PC-9 (cell line): ENCODE measurements at regions of chr15 and their contacts with region 1.

Region 1: DNA sequence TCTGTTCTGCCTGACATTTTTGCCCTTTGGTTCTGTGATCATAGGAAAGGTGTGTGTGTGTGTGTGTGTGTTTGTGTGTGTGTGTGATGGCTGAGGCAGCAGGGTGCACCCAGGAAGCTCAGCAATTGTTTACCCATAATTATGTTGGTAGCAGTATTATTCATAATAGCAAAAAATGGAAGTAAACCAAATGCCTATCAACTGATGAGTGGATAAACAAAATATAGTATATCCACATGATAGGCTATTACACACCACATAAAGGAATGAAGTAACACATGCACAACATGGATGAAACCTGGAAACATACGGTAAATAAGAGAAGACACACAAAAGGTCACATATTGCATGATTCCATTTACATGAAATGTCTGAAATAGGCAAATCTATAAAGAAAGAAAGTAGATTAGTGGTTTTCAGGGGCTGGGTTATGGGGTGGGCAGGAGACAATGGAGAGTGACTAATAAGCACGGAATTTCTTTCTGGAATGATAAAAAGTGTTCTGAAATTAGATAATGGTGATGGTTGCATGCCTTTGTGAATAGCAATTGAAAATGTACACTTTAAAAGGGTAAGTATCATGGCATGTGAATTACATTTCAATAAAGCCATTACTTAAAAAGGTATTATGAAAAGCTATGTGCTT is 167.2 kb downstream of the POLR2M start:
- DNase-seq: no peak
- H3K4me3 ChIP-seq: no peak overlapping the region
- H3K27ac ChIP-seq: no peak overlapping the region
- H3K4me1 ChIP-seq: no peaks in the 10 kb centered on the region
- H3K27me3 ChIP-seq: no peaks in the 10 kb centered on the region
- CTCF ChIP-seq: no peak

Region 2: GRCh38 chr15:57183041-57183440 is 690.6 kb before region 1 on chr15:
- CTCF ChIA-PET with region 1: interaction called, 20 read pairs
- POLR2A ChIA-PET with region 1: no interaction called
- intact Hi-C with region 1: no loop called
- DNase-seq: no peak
- H3K4me3 ChIP-seq: no peak overlapping the region
- H3K27ac ChIP-seq: no peak overlapping the region
- H3K4me1 ChIP-seq: no peaks in the 10 kb centered on the region
- H3K27me3 ChIP-seq: no peaks in the 10 kb centered on the region
- CTCF ChIP-seq: no peak

Region 3: GRCh38 chr15:57705746-57706404 is 167.8 kb before region 1 on chr15:
- CTCF ChIA-PET with region 1: no interaction called
- POLR2A ChIA-PET with region 1: no interaction called
- intact Hi-C with region 1: no loop called
- DNase-seq: no peak
- H3K4me3 ChIP-seq: peak overlapping the region; percentile 74
- H3K27ac ChIP-seq: peak overlapping the region; percentile 74
- H3K4me1 ChIP-seq: peaks cover 15% of the 10 kb centered on the region
- H3K27me3 ChIP-seq: no peaks in the 10 kb centered on the region
- CTCF ChIP-seq: no peak

Region 4: GRCh38 chr15:57890351-57890750 is 16.7 kb after region 1 on chr15:
- CTCF ChIA-PET with region 1: no interaction called
- POLR2A ChIA-PET with region 1: no interaction called
- intact Hi-C with region 1: no loop called
- DNase-seq: no peak
- H3K4me3 ChIP-seq: no peak overlapping the region
- H3K27ac ChIP-seq: no peak overlapping the region
- H3K4me1 ChIP-seq: no peaks in the 10 kb centered on the region
- H3K27me3 ChIP-seq: 0 out of 2 replicates have a peak, but pooled peaks cover 7% of the 10 kb centered on the region
- CTCF ChIP-seq: no peak

Region 5: DNA sequence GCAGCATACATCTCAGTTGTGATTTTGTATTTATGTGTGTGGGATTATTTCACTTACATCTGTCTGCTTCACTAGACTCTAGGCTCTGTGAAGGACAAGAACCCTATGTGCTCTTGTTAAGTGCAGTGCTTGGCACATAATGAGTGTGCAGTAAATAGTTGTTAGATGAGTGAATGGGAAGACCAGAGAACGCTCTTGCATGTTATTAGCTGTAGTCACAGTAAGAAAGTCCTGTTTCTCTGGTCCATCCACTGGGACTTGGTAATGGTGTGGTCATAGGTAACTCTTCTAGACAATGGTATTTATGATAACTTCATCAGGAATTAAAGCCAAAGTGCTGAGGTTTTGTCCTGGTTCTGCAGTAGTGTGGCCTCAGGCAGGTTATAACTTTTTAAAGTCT is 263.0 kb after region 1 on chr15:
- CTCF ChIA-PET with region 1: no interaction called
- POLR2A ChIA-PET with region 1: no interaction called
- intact Hi-C with region 1: no loop called
- DNase-seq: peak in 1 of 2 experiments; percentile 73
- H3K4me3 ChIP-seq: no peak overlapping the region
- H3K27ac ChIP-seq: no peak overlapping the region
- H3K4me1 ChIP-seq: no peaks in the 10 kb centered on the region
- H3K27me3 ChIP-seq: no peaks in the 10 kb centered on the region
- CTCF ChIP-seq: no peak

Region 6: GRCh38 chr15:58190419-58190818 is 316.7 kb after region 1 on chr15:
- CTCF ChIA-PET with region 1: interaction called, 11 read pairs
- POLR2A ChIA-PET with region 1: no interaction called
- intact Hi-C with region 1: no loop called
- DNase-seq: no peak
- H3K4me3 ChIP-seq: no peak overlapping the region
- H3K27ac ChIP-seq: no peak overlapping the region
- H3K4me1 ChIP-seq: 0 out of 2 replicates have a peak, but pooled peaks cover 3% of the 10 kb centered on the region
- H3K27me3 ChIP-seq: no peaks in the 10 kb centered on the region
- CTCF ChIP-seq: no peak